WTC11 (cell line): ENCODE measurements at regions of chr2 and their contacts with region 1.

Region 1: GRCh38 chr2:20538308-20539132 is 91.6 kb downstream of the RHOB start:
- DNase-seq: no peak
- ATAC-seq: no peak
- H3K4me3 Mint-ChIP-seq: no peak overlapping the region
- H3K27ac Mint-ChIP-seq: no peak overlapping the region
- H3K4me1 Mint-ChIP-seq: peaks cover 29% of the 10 kb centered on the region
- H3K27me3 Mint-ChIP-seq: peaks cover 6% of the 10 kb centered on the region; the same call in 1 of the 2 replicates
- CTCF ChIP-seq: no peak

Region 2: DNA sequence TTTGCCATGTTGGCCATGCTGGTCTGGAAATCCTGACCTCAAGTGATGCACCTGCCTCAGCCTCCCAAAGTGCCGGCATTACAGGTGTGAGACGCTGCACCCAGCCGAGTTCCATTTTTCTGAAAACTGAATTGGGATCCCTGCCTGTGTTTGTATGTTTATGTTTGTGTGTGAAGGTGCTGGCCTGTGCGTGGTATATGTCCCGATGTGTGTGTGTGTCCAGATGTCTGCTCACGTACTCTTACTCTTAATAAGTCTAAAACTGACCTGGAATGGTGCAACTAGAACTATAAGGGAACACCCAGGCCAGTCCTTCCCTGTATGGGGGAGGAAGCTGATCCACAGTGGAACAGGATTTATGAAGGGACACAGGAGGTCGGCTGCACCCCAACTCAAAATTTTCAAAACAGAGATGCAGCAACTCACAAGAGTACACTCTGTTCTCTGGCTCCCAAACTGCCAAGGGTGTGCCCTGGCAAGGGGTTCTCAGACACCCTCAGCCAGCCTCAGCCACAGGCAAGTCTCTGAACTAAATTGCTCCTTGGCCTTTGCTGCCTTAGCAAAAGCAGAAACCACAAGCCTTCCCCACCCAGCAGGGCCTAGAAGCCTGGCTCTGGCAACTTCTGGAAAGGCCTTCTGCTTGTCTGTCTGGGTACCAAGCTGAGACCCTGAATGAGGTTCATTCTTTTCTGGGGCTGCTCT is 55.2 kb before region 1 on chr2:
- CTCF ChIA-PET with region 1: no interaction called
- POLR2A ChIA-PET with region 1: no interaction called
- DNase-seq: no peak
- ATAC-seq: no peak
- H3K4me3 Mint-ChIP-seq: no peak overlapping the region
- H3K27ac Mint-ChIP-seq: no peak overlapping the region
- H3K4me1 Mint-ChIP-seq: peaks cover 15% of the 10 kb centered on the region
- H3K27me3 Mint-ChIP-seq: peaks cover 17% of the 10 kb centered on the region
- CTCF ChIP-seq: no peak

Region 3: GRCh38 chr2:20561701-20562454 is 23.4 kb after region 1 on chr2:
- CTCF ChIA-PET with region 1: interaction called, 11 read pairs
- POLR2A ChIA-PET with region 1: no interaction called
- DNase-seq: no peak
- ATAC-seq: no peak
- H3K4me3 Mint-ChIP-seq: no peak overlapping the region; the same call in 1 of the 2 replicates
- H3K27ac Mint-ChIP-seq: no peak overlapping the region
- H3K4me1 Mint-ChIP-seq: peaks cover 42% of the 10 kb centered on the region
- H3K27me3 Mint-ChIP-seq: peaks cover under 1% of the 10 kb centered on the region; the same call in 1 of the 2 replicates
- CTCF ChIP-seq: no peak

Region 4: DNA sequence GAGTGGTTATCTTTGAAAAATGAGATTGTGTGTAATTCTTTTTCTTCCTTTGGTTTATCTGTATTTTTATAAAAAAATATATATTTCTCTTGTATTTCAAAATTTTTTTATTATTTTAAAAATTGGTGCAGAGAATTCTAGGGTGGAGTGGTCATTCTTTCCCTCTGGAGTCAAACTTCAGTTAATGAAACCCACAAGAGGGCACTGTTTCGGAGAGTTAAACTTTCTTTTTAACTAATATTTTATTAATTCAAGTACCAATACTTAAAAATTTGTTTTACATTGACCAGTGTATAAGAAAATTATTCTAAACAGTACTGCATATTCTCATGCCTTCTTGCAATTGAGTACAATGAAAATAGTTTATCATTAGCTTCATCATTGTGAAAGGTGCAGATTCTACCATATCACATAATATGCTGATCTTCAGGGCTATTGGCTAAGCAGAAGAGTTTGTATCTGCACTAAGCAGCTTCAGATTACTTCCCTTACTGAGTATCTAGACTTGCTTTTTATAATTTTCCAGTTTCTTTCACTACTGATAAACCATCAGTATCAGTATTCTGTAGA is 62.3 kb after region 1 on chr2:
- CTCF ChIA-PET with region 1: no interaction called
- POLR2A ChIA-PET with region 1: no interaction called
- DNase-seq: no peak
- ATAC-seq: no peak
- H3K4me3 Mint-ChIP-seq: no peak overlapping the region
- H3K27ac Mint-ChIP-seq: no peak overlapping the region
- H3K4me1 Mint-ChIP-seq: peaks cover 9% of the 10 kb centered on the region
- H3K27me3 Mint-ChIP-seq: no peaks in the 10 kb centered on the region
- CTCF ChIP-seq: no peak